Caco-2 (cell line): ENCODE measurements at regions of chr5 and their contacts with region 1.

Region 1: DNA sequence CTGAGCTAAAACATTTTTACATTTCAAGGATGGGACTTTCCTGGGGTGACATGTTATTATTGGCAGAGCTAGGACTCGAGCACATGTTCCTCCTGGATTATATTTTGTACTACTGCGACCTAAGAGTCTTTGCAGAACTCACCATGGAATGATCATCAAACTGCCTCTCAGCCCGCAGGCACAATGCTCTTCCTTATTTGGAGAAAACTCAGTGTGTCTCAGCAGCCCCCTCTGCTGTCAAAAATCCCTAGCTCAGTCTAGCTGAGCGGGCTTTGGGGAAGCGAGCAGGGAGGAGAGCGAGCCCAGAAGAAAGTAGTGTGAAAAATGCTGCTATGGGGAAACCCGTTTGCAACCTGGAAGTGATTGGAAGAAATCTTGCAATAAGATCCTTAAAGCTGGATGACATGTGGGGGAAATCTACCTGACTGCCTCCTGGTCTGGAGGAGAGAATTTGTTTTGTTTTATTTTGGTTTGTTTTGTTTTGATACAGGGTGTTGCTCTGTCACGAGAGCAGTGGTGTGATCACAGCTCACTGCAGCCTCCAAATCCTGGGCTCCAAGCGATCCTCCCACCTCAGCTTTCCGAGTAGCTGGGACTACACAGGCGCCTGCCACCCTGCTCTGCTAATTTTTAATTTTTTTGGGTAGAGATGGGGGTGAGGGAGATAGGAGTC is 89.9 kb upstream of the CLINT1 start:
- DNase-seq: peak; percentile 90 to 93
- H3K4me3 ChIP-seq: no peak overlapping the region
- H3K4me3 Mint-ChIP-seq: peak overlapping the region; percentile 51
- H3K27ac Mint-ChIP-seq: peak overlapping the region; percentile 52
- H3K4me1 ChIP-seq: peaks cover 6% of the 10 kb centered on the region; the same call in 1 of the 2 replicates
- H3K4me1 Mint-ChIP-seq: peaks cover 16% of the 10 kb centered on the region
- H3K27me3 ChIP-seq: no peaks in the 10 kb centered on the region
- H3K27me3 Mint-ChIP-seq: no peaks in the 10 kb centered on the region
- CTCF ChIP-seq: peak; percentile 86

Region 2: GRCh38 chr5:157121709-157122108 is 827.2 kb before region 1 on chr5:
- CTCF ChIA-PET with region 1: no interaction called
- POLR2A ChIA-PET with region 1: no interaction called
- intact Hi-C with region 1: no loop called
- DNase-seq: no peak
- H3K4me3 ChIP-seq: no peak overlapping the region
- H3K4me3 Mint-ChIP-seq: no peak overlapping the region
- H3K27ac Mint-ChIP-seq: no peak overlapping the region
- H3K4me1 ChIP-seq: no peaks in the 10 kb centered on the region
- H3K4me1 Mint-ChIP-seq: peaks cover 3% of the 10 kb centered on the region
- H3K27me3 ChIP-seq: no peaks in the 10 kb centered on the region
- H3K27me3 Mint-ChIP-seq: no peaks in the 10 kb centered on the region
- CTCF ChIP-seq: no peak

Region 3: GRCh38 chr5:157761690-157762621 is 186.9 kb before region 1 on chr5:
- CTCF ChIA-PET with region 1: no interaction called
- POLR2A ChIA-PET with region 1: no interaction called
- intact Hi-C with region 1: loop called (anchors 1 kb)
- DNase-seq: peak; percentile 44 to 53
- H3K4me3 ChIP-seq: no peak overlapping the region
- H3K4me3 Mint-ChIP-seq: no peak overlapping the region
- H3K27ac Mint-ChIP-seq: no peak overlapping the region
- H3K4me1 ChIP-seq: no peaks in the 10 kb centered on the region
- H3K4me1 Mint-ChIP-seq: no peaks in the 10 kb centered on the region
- H3K27me3 ChIP-seq: no peaks in the 10 kb centered on the region
- H3K27me3 Mint-ChIP-seq: no peaks in the 10 kb centered on the region
- CTCF ChIP-seq: peak; percentile 70 to 80

Region 4: GRCh38 chr5:157820593-157821252 is 128.2 kb before region 1 on chr5:
- CTCF ChIA-PET with region 1: interaction called, 8 read pairs
- POLR2A ChIA-PET with region 1: no interaction called
- intact Hi-C with region 1: loop called (anchors 1 kb)
- DNase-seq: peak in 1 of 2 experiments; percentile 54
- H3K4me3 ChIP-seq: no peak overlapping the region
- H3K4me3 Mint-ChIP-seq: no peak overlapping the region
- H3K27ac Mint-ChIP-seq: peak overlapping the region; percentile 25
- H3K4me1 ChIP-seq: peaks cover 24% of the 10 kb centered on the region
- H3K4me1 Mint-ChIP-seq: peaks cover 17% of the 10 kb centered on the region
- H3K27me3 ChIP-seq: no peaks in the 10 kb centered on the region
- H3K27me3 Mint-ChIP-seq: no peaks in the 10 kb centered on the region
- CTCF ChIP-seq: peak; percentile 54 to 56

Region 5: DNA sequence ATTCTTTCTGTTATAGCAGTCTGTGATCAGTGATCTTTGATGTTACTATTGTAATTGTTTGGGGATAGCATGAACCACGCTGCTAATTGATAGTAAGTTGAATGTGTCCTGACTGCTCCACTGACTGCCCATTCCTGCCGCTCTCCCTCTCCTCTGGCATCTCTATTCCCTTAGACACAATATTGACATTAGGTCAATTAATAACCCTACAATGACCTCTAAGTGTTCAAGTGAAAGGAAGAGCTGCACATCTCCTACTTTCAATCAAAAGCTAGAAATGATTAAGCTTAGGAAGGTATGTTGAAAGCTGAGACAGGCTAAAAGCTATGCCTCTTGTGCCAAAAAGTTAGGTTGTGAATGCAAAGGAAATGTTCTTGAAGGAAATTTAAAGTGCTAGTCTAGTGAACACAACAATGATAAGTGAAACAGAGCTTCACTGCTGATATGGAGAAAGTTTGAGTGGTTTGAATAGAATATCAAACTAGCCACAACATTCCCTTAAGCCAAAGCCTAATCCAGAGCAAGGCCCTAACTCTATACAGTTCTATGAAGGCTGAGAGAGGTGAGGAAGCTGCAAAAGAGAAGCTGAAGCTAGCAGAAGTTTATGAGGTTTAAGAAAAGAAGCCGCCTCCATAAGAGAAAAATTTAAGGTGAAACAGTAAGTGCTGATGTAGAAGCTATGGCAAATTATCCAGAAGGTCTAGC is 102.8 kb before region 1 on chr5:
- CTCF ChIA-PET with region 1: interaction called, 3 read pairs
- POLR2A ChIA-PET with region 1: no interaction called
- intact Hi-C with region 1: loop called (anchors 2 kb)
- DNase-seq: no peak
- H3K4me3 ChIP-seq: no peak overlapping the region
- H3K4me3 Mint-ChIP-seq: peak overlapping the region; percentile 40
- H3K27ac Mint-ChIP-seq: no peak overlapping the region
- H3K4me1 ChIP-seq: peaks cover 14% of the 10 kb centered on the region
- H3K4me1 Mint-ChIP-seq: peaks cover 12% of the 10 kb centered on the region
- H3K27me3 ChIP-seq: no peaks in the 10 kb centered on the region
- H3K27me3 Mint-ChIP-seq: no peaks in the 10 kb centered on the region
- CTCF ChIP-seq: no peak

Region 6: GRCh38 chr5:157855404-157855994 is 93.4 kb before region 1 on chr5:
- CTCF ChIA-PET with region 1: interaction called, 9 read pairs
- POLR2A ChIA-PET with region 1: no interaction called
- intact Hi-C with region 1: loop called (anchors 1 kb)
- DNase-seq: peak; percentile 63 to 73
- H3K4me3 ChIP-seq: no peak overlapping the region
- H3K4me3 Mint-ChIP-seq: no peak overlapping the region
- H3K27ac Mint-ChIP-seq: no peak overlapping the region
- H3K4me1 ChIP-seq: peaks cover 9% of the 10 kb centered on the region
- H3K4me1 Mint-ChIP-seq: peaks cover 6% of the 10 kb centered on the region
- H3K27me3 ChIP-seq: no peaks in the 10 kb centered on the region
- H3K27me3 Mint-ChIP-seq: no peaks in the 10 kb centered on the region
- CTCF ChIP-seq: peak; percentile 65 to 68

Region 7: DNA sequence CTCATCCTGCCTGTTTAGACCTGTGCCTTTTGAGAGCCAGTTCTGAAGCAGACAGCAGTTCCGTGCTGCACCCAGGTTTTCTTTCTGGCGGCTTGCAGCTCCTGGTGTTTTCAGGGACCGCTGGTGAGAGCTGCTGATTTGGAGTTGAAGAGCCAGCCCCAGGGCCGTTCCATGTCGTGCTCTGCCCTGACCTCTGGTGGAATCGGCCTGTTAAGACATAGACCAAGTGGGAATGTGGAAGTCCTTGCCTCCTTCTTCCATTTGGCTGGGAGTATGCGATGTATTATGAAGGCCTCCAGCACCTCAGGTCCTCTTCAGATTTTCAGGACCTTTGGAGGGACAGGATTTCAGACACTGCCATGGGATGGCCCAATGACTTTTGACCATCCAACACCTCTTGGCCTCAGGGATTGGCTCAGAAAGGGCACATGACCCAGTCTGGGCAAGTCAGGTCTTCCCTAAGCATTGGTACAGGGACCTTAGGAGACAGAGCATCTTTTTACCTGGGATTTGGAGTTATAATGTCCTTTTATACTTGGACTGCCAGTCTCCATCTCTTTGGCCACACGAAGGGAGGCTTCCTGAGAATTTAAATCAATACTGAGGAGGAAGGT is 46.1 kb after region 1 on chr5:
- CTCF ChIA-PET with region 1: interaction called, 9 read pairs
- POLR2A ChIA-PET with region 1: no interaction called
- intact Hi-C with region 1: loop called (anchors 1 kb)
- DNase-seq: peak; percentile 75 to 80
- H3K4me3 ChIP-seq: no peak overlapping the region
- H3K4me3 Mint-ChIP-seq: peak overlapping the region; percentile 49
- H3K27ac Mint-ChIP-seq: no peak overlapping the region
- H3K4me1 ChIP-seq: no peaks in the 10 kb centered on the region
- H3K4me1 Mint-ChIP-seq: no peaks in the 10 kb centered on the region
- H3K27me3 ChIP-seq: no peaks in the 10 kb centered on the region
- H3K27me3 Mint-ChIP-seq: no peaks in the 10 kb centered on the region
- CTCF ChIP-seq: peak; percentile 75 to 93